Activated T-helper 2 cell treated with anti-CD3 and anti-CD28 coated beads, Interferon-gamma antibody, Interleukin-2, Interleukin-4, amounts not matched to agents 10 μg/mL and 5 μg/mL and 100 μg/mL, durations not matched to agents 14 hours and 24 hours and 36 hours (primary cell): ENCODE measurements at regions of chr11 and their contacts with region 1.

Region 1: DNA sequence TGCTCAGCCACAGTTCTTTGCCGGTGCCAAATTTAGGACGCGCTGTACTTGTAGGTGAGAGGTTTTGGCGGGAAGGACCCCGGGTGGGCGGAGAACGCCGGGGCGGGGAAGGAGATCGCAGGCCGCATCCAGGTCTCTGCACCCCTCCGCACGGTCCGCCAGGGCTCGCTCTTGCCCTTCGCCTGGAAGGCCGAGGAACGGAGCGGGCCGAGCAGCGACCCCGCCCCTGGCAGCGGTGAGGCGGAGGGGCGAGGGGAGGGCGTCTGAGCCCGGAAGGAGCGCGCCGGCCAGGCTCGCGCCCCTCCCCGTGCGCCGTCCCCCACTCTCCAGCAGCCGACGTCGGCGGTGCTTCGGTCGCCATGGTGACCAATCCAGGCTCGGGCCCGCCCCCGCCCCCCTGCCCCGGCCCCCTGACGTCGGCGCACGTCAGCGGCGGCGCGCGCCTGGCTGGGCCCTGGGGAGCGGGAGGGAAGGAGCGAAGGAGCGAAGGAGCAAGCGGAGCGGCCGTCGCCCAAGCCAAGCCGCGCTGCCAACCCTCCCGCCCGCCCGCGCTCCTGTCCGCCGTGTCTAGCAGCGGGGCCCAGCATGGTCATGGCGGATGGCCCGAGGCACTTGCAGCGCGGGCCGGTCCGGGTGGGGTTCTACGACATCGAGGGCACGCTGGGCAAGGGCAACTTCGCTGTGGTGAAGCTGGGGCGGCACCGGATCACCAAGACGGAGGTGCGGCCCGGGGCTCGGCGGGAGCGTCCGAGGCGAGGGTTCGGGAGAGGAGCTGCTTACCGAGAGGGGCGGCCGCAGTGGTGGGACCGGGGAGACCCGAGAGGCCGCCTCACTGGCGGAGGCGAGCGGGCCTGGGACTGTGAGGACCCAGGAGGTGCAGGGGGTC is at the start of gene SIK2:
- DNase-seq: peak; percentile 86
- H3K4me3 Mint-ChIP-seq: peak within 1 kb of the TSS; percentile 96
- H3K27ac Mint-ChIP-seq: peak within 1 kb of the TSS; percentile 88
- H3K4me1 Mint-ChIP-seq: peaks cover 31% of the 10 kb centered on the region
- H3K27me3 Mint-ChIP-seq: peaks cover 6% of the 10 kb centered on the region
- total RNA-seq, gene SIK2: 9.9 TPM in 2 replicates

Region 2: GRCh38 chr11:111635706-111636045 is 33.5 kb after region 1 on chr11:
- intact Hi-C with region 1: no loop called
- DNase-seq: no peak
- H3K4me3 Mint-ChIP-seq: no peak overlapping the region
- H3K27ac Mint-ChIP-seq: no peak overlapping the region
- H3K4me1 Mint-ChIP-seq: peaks cover 28% of the 10 kb centered on the region
- H3K27me3 Mint-ChIP-seq: no peaks in the 10 kb centered on the region

Region 3: DNA sequence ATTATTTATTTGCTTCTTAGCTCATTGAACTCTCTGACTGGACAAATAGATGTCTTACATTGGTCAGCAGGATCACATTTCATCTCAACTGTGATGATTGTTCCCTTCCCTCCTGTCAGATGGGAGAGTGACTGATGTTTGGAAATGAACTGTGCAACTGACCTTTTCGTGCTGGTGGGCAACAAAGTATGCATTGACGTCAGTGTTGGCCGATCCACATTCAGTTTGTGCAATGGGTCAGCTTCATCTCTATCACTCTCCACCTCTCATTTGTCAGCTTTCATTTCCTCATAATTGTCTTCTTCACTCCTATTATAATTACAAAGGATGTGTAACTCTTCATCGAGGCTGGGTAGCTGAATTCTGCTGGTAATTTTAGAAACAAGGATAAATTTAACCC is 92.6 kb after region 1 on chr11:
- intact Hi-C with region 1: loop called (anchors 10 kb)
- DNase-seq: no peak
- H3K4me3 Mint-ChIP-seq: no peak overlapping the region
- H3K27ac Mint-ChIP-seq: no peak overlapping the region
- H3K4me1 Mint-ChIP-seq: peaks cover 13% of the 10 kb centered on the region
- H3K27me3 Mint-ChIP-seq: no peaks in the 10 kb centered on the region

Region 4: DNA sequence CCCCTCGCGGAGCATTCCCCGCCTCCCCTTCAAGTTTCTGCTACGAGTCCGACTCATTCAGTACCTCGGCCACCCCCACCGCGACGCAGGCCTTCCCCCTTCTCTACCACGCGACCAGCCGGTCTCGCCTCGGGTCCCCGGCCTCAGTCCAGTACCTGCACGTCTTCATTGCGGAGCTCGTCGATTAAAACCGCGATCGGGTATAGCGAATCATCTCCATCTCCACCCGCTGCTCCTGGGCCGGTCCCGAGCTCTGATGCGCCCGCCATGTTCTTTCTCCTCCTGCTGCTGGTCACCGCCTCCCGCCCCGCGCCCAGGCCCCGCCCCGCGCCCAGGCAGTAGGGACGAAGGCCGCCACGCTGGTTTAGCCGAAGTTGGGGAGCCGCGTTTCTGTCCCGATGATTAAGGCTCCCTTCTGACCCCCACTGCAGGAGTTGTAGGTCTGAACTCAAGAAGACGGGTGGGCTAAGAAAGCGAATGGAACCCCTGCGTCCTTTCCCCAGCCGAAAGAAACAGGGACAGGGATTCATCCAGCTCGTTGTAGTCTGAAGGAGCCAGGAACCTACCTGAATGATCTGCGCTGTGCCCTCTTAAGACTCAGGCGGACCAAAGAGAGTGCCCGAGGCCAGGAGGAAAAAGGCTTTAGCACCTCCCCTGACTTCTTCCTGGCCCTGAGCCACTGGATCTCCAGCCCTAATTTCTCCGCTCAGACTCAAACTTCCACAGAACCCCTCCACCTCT is 164.0 kb after region 1 on chr11 and contains the start of gene PPP2R1B:
- intact Hi-C with region 1: loop called (anchors 1 kb)
- DNase-seq: peak; percentile 66
- H3K4me3 Mint-ChIP-seq: peak within 1 kb of the TSS; percentile 98
- H3K27ac Mint-ChIP-seq: peak within 1 kb of the TSS; percentile 98
- H3K4me1 Mint-ChIP-seq: peaks cover 26% of the 10 kb centered on the region
- H3K27me3 Mint-ChIP-seq: no peaks in the 10 kb centered on the region
- total RNA-seq, gene PPP2R1B: 57.7 and 64.2 TPM in 2 replicates